ENCODE measurements at regions of chr7 and their contacts with region 1.

Region 1: DNA sequence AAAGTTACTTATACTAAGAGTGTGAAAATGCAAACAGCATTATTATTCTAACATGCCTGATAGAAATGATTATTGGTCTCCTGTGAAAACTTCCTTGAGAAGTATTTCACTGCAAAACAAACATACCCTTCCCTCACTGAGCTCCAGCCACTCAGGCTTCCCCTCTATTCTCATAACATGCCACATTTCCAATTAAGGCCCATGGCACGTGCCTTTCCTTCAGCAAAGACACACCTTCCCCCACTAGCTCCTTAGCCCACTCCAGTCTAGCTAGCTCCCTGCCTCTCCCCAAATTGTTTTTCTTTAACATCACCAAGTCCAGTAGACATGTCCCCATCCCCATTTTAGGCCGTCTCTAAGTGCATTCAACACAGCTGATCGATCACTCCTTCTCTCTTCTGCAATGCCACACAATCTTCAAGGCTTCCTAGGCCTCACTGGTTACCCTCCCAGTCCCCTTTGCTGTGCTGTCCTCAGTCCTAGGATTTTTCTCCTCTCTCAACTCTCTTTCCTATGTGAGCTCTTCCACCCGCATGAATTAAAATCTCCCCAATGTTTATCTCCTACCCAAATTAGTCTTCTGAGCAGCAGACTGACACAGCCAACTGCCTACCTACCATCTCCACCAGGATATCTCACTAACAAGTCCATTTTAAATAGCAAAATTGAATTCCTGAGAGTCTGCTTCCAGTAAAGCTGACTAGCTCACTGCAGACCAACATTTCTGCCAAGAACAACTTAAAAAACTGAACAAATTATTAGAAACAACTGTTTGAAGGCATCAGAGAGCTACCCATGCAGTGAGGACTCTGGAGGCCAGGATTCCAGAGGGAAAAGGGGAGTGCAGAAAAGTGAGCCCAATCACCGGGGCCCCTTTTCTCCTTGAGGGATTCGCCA is 11.9 kb downstream of the CYTH3 start:
- DNase-seq: no peak

Region 2: GRCh38 chr7:6181136-6181535 is 79.4 kb before region 1 on chr7:
- in situ Hi-C with region 1: loop called (anchors 10 kb)
- DNase-seq: no peak

Region 3: GRCh38 chr7:6317797-6318438 is 57.4 kb after region 1 on chr7:
- in situ Hi-C with region 1: no loop called
- DNase-seq: no peak

Region 4: GRCh38 chr7:6520163-6520981 is 259.8 kb after region 1 on chr7:
- in situ Hi-C with region 1: no loop called
- DNase-seq: no peak

Measured in Caki2 (cell line).